Ovary (tissue), 10 donors: ENCODE measurements at regions of chr22 and their contacts with region 1.

Region 1: GRCh38 chr22:29154364-29155048 is 51.2 kb upstream of the EMID1 start:
- DNase-seq: peak; percentile 68 to 86 (median 83)
- H3K4me3 ChIP-seq: no peak overlapping the region
- H3K27ac ChIP-seq: peak overlapping the region in 1 of 2 donors; percentile 34
- H3K4me1 ChIP-seq: peaks cover 3% of the 10 kb centered on the region
- H3K27me3 ChIP-seq: no peaks in the 10 kb centered on the region
- CTCF ChIP-seq: peak; percentile 88 to 89 (median 89)
- EP300 ChIP-seq: no peak
- POLR2A ChIP-seq: no peak

Region 2: DNA sequence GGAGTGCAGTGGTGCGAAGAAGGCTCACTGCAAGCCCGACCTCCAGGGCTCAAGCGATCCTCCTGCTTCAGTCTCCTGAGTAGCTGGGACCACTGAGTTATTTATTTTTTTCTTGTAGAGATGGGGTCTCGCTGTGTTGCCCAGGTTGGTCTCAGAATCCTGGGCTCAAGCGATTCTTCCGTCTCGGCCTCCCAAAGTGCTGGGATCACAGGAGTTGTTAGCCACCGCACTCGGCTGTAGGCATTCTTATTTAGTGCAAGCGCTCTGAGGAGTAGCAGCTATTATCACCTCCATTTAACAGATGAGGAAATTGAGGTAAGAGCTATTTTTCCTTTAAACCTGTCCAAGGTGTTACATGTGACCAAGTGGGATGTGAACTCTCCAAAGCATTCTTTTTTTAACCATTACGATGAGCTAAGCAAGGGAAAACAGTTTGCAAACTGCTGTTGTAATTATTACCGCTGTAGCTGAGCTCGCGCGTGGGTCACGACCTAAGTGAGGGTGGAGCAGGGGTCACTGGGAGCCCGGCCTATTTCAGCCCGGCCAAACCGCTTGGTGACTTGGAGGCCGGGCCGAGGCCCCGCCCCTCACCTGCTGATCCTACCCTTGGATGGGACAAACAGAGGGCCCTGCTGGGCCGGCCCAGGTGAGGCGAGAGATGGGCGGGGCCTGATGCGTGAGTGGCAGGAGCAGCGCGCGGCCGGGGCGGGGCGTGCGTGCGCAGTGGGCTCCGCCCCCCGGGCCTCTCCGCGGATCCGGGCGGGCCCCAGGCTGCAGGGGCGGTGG is 82.1 kb before region 1 on chr22:
- intact Hi-C with region 1: loop called in 2 of 4 experiments (anchors 5 to 10 kb)
- DNase-seq: peak; percentile 86 to 93 (median 92)
- H3K4me3 ChIP-seq: peak overlapping the region; percentile 92
- H3K27ac ChIP-seq: no peak overlapping the region
- H3K4me1 ChIP-seq: peaks cover 3% of the 10 kb centered on the region
- H3K27me3 ChIP-seq: no peaks in the 10 kb centered on the region
- CTCF ChIP-seq: no peak
- EP300 ChIP-seq: no peak
- POLR2A ChIP-seq: no peak

Region 3: GRCh38 chr22:29300807-29301601 is 146.5 kb after region 1 on chr22:
- intact Hi-C with region 1: no loop called
- DNase-seq: peak in 2 of 5 donors; percentile 15 to 20
- H3K4me3 ChIP-seq: no peak overlapping the region
- H3K27ac ChIP-seq: no peak overlapping the region
- H3K4me1 ChIP-seq: peaks cover 3% of the 10 kb centered on the region
- H3K27me3 ChIP-seq: no peaks in the 10 kb centered on the region
- CTCF ChIP-seq: no peak
- EP300 ChIP-seq: no peak
- POLR2A ChIP-seq: no peak